AG04450 (cell line): ENCODE measurements at regions of chr5 and their contacts with region 1.

Region 1: DNA sequence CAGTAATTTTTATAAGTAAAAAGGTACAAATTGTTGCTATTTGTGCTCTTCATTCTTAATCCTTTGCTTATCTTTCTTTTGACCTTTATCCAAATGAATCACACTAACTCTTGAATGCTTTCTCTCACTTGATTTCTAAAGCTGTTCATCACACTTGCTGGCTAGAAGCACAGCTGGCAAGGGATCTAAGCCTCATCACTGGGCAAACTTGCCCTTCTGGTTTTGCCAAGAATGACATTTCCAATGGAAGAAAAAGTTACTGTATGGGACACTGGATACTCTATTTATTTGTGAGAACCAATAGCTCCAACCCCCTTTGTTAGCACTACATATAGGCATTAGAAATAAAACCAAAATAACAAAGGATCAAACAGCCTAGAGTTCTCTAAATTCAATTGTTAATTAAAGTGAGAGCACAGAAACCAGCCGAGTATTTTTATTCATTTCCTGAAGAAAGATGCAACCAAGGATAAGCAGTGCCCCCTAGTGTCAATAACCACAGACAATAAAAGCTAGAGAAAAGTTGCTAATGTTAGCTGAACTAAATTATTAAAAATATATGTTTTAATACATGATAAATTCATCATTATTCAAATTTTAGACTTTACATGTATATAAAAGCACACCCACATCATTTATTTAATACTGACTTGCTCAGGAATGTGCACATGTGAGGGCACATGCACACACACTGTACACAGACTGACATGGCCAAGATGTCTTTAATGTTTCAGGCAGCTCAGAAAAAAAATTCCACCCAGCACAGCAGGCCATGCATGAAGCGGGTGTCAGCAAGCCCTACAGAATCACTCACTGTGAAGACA is 59.8 kb upstream of the POU5F2 start:
- DNase-seq: no peak
- H3K4me3 ChIP-seq: no peak overlapping the region
- H3K27ac ChIP-seq: no peak overlapping the region
- H3K27me3 ChIP-seq: no peaks in the 10 kb centered on the region
- CTCF ChIP-seq: peak; percentile 67

Region 2: GRCh38 chr5:93452255-93452654 is 348.9 kb before region 1 on chr5:
- CTCF ChIA-PET with region 1: no interaction called
- POLR2A ChIA-PET with region 1: no interaction called
- DNase-seq: no peak
- H3K4me3 ChIP-seq: no peak overlapping the region
- H3K27ac ChIP-seq: no peak overlapping the region
- H3K27me3 ChIP-seq: no peaks in the 10 kb centered on the region
- CTCF ChIP-seq: no peak

Region 3: GRCh38 chr5:93589829-93590215 is 211.4 kb before region 1 on chr5:
- CTCF ChIA-PET with region 1: interaction called, 14 read pairs
- POLR2A ChIA-PET with region 1: no interaction called
- DNase-seq: no peak
- H3K4me3 ChIP-seq: peak overlapping the region; percentile 92
- H3K27ac ChIP-seq: no peak overlapping the region
- H3K27me3 ChIP-seq: no peaks in the 10 kb centered on the region
- CTCF ChIP-seq: no peak

Region 4: GRCh38 chr5:93607367-93608258 is 193.6 kb before region 1 on chr5:
- CTCF ChIA-PET with region 1: interaction called, 34 read pairs
- POLR2A ChIA-PET with region 1: interaction called, 5 read pairs
- DNase-seq: no peak
- H3K4me3 ChIP-seq: peak overlapping the region; percentile 48
- H3K27ac ChIP-seq: peak overlapping the region; percentile 75
- H3K27me3 ChIP-seq: peaks cover 21% of the 10 kb centered on the region
- CTCF ChIP-seq: peak; percentile 68

Region 5: GRCh38 chr5:93681432-93681831 is 119.8 kb before region 1 on chr5:
- CTCF ChIA-PET with region 1: interaction called, 11 read pairs
- POLR2A ChIA-PET with region 1: no interaction called
- DNase-seq: no peak
- H3K4me3 ChIP-seq: no peak overlapping the region
- H3K27ac ChIP-seq: no peak overlapping the region
- H3K27me3 ChIP-seq: no peaks in the 10 kb centered on the region
- CTCF ChIP-seq: peak; percentile 33; the same call in 1 of the 2 replicates

Region 6: DNA sequence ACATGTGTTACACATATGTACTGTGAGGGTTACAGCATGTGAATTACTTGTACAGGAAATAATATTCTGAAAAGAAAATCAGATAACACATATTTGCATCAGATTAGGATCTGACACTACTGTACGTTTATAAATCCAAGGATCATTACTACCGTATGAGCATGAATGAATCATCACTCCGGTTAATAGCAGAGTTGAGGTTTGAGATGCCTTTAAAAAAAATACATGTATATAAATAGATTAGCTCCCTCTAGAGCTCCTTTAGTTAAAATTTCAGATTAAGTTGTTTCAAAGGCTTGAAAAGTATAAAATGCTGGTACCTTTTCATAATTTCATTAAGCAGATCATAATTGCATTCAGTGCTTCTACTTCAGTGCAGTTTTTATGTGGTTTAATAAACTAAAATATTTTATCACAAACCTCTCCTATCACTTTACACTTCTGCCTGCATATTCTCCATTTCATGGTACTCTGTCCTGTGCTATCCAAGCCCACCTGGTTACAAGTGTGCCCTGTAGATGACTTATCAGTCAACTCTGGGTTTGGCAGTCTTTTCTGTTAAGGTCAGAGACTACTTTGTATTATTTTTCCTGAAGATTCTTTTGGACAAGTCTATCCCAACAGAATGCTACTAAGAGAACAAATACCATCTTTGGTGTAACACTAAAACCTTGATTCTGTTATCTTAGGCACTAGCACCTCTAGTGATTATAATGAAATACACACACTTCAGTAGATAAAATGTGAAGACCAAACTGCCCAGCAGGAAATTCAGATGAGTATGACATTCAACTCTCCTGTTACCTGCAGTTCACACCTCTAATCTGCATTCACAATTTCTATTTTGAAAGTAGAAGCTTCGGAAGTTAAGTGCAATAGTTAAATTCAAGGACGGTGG is 11.8 kb before region 1 on chr5:
- CTCF ChIA-PET with region 1: interaction called, 35 read pairs
- POLR2A ChIA-PET with region 1: no interaction called
- DNase-seq: peak; percentile 18
- H3K4me3 ChIP-seq: no peak overlapping the region
- H3K27ac ChIP-seq: no peak overlapping the region
- H3K27me3 ChIP-seq: no peaks in the 10 kb centered on the region
- CTCF ChIP-seq: peak; percentile 24